Activated T-helper 1 cell treated with anti-CD3 and anti-CD28 coated beads, Interleukin-12 subunit alpha, Interleukin-12 subunit beta, Interleukin-2, Interleukin-4 antibody, amounts not matched to agents 30 ng/mL and 10 ng/mL and 1 ng/mL, durations not matched to agents 14 hours and 24 hours and 36 hours (primary cell): ENCODE measurements at regions of chr6 and their contacts with region 1.

Region 1: DNA sequence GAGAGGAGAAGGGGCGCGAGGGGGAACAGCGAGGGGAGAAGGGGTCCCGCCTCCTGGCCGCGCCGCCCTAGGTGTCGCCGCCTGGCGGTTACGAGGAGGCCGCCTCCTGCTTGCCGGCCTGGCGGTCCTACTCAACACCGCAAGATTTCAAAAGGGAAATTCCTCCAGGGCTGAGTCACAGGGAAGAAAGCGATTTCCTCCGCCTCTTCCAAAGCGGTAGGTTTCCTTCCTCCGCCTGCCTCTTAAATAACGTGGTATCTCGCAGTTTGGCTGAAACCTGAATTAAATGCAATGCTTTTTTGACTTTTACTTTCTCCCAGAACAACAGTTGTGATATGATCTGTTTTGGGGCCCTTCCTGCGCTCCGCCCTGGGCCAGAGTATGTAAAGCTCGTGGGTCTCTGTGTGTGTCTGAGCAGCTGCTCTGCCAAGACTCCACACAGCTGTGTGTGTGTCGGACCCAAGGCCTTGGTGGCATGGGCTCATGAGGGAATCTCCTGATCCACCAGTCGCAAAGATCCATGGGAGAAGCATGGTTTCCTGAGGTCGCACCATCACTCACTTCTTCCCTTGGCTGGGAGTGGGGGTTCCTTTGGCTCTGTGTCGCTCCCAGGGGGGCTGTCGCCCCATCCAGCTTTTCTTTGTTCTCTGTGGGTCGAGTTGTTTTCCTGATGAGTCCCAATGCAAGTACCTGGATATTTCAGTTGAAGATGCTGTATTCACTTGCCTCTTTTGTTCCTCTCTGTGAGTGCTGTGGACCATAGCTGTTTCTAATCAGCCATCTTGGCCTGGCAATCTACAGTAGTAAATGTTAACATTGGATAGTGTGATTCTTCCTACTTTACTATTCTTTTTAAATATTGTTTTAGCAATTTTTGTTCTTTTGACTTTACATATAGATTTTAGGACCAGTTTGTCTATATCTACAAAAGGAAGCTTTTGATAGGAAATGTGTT is 31.6 kb upstream of the NOTCH4 start:
- DNase-seq: peak; percentile 47
- H3K4me3 Mint-ChIP-seq: peak overlapping the region; percentile 9
- H3K27ac Mint-ChIP-seq: peak overlapping the region; percentile 12
- H3K4me1 Mint-ChIP-seq: peaks cover 22% of the 10 kb centered on the region
- H3K27me3 Mint-ChIP-seq: peaks cover 45% of the 10 kb centered on the region

Region 2: DNA sequence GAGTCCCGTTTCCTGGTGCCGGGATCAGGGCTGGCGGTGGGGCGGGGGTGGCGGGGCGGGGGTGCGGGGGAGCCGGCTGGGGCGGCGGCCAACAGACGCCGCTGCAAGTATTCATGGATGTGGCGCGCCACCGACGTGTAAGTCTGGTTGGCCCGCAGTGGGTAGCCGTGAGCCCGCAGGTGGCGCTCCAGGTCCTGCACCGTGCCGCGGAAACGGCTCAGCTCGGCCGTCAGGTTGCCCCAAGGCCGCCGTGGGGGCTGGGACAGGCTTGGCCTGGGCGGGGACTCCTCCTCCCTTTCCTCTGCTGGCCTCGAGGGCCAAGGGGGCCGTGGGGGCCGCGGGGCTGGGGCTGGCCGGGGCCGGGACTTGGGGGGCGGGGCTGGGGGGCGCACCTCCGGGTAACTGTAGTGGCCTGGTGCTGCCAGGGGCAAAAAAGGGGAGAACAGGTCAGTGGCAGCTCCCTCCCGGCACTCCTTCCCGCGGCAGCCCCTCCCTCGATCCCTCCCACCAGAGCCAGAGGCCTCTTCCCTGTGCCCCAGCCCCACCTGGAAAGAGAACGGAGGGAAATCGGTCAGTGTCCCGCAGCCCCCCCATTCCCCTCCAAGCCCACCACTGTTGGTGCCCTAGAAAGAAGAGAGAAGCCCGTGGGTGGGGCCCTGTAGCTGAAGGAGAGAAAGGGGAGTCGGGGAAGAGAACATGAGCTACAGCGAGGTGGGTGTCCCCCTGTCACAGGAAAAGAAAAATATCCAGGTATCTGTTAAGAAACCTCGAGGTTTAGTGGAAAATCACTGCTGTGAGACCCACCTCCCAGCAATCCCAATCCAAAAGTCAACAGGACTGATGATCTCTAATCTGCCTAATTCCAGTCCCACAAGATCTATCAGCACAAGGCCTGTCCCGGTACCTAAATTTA is 167.6 kb before region 1 on chr6:
- intact Hi-C with region 1: loop called (anchors 10 kb)
- DNase-seq: peak; percentile 55
- H3K4me3 Mint-ChIP-seq: no peak overlapping the region
- H3K27ac Mint-ChIP-seq: no peak overlapping the region
- H3K4me1 Mint-ChIP-seq: peaks cover 11% of the 10 kb centered on the region
- H3K27me3 Mint-ChIP-seq: peaks cover 42% of the 10 kb centered on the region

Region 3: GRCh38 chr6:32195652-32195901 is 59.9 kb before region 1 on chr6:
- intact Hi-C with region 1: loop called (anchors 5 kb)
- DNase-seq: peak; percentile 100
- H3K4me3 Mint-ChIP-seq: peak overlapping the region; percentile 97
- H3K27ac Mint-ChIP-seq: peak overlapping the region; percentile 98
- H3K4me1 Mint-ChIP-seq: peaks cover 48% of the 10 kb centered on the region
- H3K27me3 Mint-ChIP-seq: peaks cover 2% of the 10 kb centered on the region

Region 4: GRCh38 chr6:32298663-32299267 is 43.3 kb after region 1 on chr6:
- intact Hi-C with region 1: no loop called
- DNase-seq: no peak
- H3K4me3 Mint-ChIP-seq: no peak overlapping the region
- H3K27ac Mint-ChIP-seq: no peak overlapping the region
- H3K4me1 Mint-ChIP-seq: peaks cover under 1% of the 10 kb centered on the region
- H3K27me3 Mint-ChIP-seq: peaks cover 45% of the 10 kb centered on the region

Region 5: DNA sequence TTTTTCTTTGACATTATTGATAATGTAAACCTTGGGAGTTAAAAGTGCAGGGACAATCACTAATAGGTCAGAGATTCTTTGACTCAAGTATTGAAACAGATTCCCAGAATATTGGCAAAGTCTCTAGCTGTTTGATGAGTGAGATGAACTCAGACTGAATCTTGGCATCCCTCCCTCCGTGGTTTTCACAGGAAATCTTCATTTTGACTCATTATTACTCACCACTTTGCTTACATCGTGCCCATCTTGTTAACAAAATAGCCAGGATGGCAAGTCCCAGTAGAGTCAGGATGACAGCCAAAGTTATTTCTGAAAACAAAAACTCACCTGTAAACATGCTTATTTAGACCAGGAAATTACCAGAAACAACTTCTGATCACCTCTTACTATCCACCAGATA is 114.2 kb after region 1 on chr6:
- intact Hi-C with region 1: loop called (anchors 10 kb)
- DNase-seq: no peak
- H3K4me3 Mint-ChIP-seq: no peak overlapping the region
- H3K27ac Mint-ChIP-seq: no peak overlapping the region
- H3K4me1 Mint-ChIP-seq: peaks cover 6% of the 10 kb centered on the region
- H3K27me3 Mint-ChIP-seq: peaks cover 26% of the 10 kb centered on the region

Region 6: GRCh38 chr6:32685603-32686002 is 430.1 kb after region 1 on chr6:
- intact Hi-C with region 1: loop called (anchors 1 kb)
- DNase-seq: peak; percentile 47
- H3K4me3 Mint-ChIP-seq: peak overlapping the region; percentile 66
- H3K27ac Mint-ChIP-seq: peak overlapping the region; percentile 77
- H3K4me1 Mint-ChIP-seq: peaks cover 46% of the 10 kb centered on the region
- H3K27me3 Mint-ChIP-seq: peaks cover 11% of the 10 kb centered on the region

Region 7: DNA sequence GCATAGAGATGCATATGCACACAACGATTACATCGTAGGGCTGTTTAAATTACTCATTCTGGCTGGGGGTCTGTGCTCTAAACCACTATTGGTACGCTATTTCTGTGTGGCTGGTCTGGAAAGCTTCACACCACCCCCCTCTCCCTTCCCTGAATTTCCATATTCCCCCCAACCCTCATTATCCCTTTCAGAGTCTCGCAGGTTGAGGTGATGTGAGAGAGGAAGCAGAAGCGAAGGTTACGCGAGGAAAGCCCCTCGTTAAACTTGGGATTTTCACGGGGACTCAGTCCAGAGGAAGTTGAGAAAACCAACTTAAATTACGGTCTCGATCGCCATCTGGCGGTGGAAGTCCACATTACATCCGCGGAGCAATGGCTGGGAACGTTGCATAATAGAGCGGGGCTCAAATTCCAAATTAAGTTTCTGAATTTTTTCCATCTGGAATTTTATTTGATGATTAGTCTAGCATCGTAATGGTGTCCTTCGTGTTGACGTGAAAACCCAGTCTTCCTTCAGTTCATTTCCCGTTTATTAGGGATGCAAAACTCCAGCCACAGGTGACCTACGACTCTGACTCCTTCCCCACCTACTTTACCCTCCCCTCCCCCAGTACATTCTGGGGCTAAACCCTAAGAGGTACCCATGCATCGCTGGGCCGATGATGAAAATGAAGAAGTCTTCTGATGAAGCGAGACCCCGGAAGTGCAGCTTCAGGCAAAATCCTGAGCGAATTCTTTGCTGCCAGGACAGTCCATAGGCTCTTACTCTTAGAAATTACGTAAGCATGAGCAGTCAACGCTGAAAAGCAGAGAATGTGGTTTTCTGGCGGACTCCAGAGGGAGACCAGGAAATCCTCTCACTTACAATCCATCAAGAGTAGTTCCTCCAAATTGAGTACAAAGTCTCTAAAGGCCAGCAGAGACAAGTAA is 541.6 kb after region 1 on chr6:
- intact Hi-C with region 1: loop called (anchors 2 kb)
- DNase-seq: peak; percentile 65
- H3K4me3 Mint-ChIP-seq: peak overlapping the region; percentile 46
- H3K27ac Mint-ChIP-seq: no peak overlapping the region
- H3K4me1 Mint-ChIP-seq: peaks cover 31% of the 10 kb centered on the region
- H3K27me3 Mint-ChIP-seq: peaks cover 53% of the 10 kb centered on the region